Right ventricle myocardium inferior (tissue), 1 donor: ENCODE measurements at regions of chr3 and their contacts with region 1.

Region 1: GRCh38 chr3:11060500-11061251 is 68.1 kb downstream of the SLC6A1 start:
- DNase-seq: peak; percentile 84
- ATAC-seq: peak; percentile 66

Region 2: DNA sequence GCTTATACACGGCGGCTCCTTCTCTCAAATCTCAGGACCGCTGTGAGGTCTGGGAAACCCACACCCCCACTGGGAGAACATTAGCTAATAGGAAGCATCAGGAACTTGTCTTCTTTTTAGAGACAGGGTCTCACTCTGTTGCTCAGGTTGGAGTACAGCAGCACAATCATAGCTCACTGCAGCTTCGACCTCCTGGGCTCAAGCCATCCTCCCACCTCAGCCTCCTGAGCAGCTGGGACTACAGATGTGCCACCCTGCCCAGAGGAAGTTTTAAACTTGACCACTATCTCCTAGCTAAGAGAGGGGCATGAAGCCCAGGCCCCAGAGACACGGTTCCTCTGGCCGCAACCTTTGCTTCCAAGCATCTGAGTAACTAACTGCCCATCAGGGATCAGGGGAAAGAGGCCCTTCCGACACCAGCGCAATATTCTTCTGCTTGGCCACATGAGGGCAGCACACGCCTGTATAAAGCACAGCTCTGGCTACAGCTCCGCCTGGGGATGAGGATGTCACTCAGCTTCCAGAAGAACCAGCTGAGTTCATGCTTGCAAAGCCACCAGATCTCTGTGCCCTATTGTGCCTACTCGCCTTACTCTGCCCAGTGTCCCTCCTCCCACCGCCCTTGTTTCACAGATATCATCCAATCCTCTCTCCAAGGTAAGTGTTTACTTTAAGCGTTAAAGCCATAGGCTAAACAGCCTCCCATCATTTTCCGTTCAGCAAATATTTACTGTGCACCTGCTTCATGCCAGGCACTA is 302.2 kb before region 1 on chr3:
- intact Hi-C with region 1: loop called (anchors 1 kb)
- DNase-seq: no peak
- ATAC-seq: peak; percentile 76

Region 3: GRCh38 chr3:11136871-11137626 is 76.4 kb after region 1 on chr3:
- intact Hi-C with region 1: no loop called
- DNase-seq: no peak
- ATAC-seq: peak; percentile 33

Region 4: GRCh38 chr3:11204697-11205348 is 144.1 kb after region 1 on chr3:
- intact Hi-C with region 1: loop called (anchors 1 kb)
- DNase-seq: no peak
- ATAC-seq: no peak

Region 5: DNA sequence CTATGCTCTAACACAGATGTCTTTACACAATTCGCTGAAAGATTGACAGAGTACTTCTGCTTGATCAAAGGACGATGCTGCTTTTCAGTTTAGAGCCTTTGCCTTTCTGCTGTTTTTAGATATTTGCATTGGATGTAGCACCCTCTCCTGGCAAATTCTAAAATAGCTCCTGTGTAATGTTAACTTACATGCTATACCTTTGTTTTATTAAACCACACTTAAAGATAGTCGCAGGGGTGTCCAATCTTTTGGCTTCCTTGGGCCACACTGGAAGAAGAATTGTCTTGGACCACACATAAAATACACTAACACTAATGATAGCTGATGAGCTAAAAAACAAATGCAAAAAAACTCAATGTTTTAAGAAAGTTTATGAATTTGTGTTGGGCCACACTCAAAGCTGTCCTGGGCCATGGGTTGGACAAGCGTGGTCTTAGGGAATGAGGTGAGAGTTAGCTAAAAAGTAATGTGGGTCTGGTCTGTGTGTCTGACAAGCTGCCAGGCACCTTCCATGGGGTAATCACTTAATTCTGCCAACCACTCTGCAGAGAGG is 274.5 kb after region 1 on chr3:
- intact Hi-C with region 1: loop called (anchors 5 kb)
- DNase-seq: no peak
- ATAC-seq: peak; percentile 67